Activated T-helper 1 cell treated with anti-CD3 and anti-CD28 coated beads, Interleukin-12 subunit alpha, Interleukin-12 subunit beta, Interleukin-2, Interleukin-4 antibody, amounts not matched to agents 30 ng/mL and 10 ng/mL and 1 ng/mL, durations not matched to agents 14 hours and 24 hours and 36 hours (primary cell): ENCODE measurements at regions of chr1 and their contacts with region 1.

Region 1: GRCh38 chr1:6393400-6394187 is at the start of gene ACOT7:
- DNase-seq: peak; percentile 87
- H3K4me3 Mint-ChIP-seq: peak within 1 kb of the TSS; percentile 89
- H3K27ac Mint-ChIP-seq: peak within 1 kb of the TSS; percentile 94
- H3K4me1 Mint-ChIP-seq: peaks cover 35% of the 10 kb centered on the region
- H3K27me3 Mint-ChIP-seq: no peaks in the 10 kb centered on the region
- total RNA-seq, gene ACOT7: 124 and 126 TPM in 2 replicates

Region 2: GRCh38 chr1:6026095-6026809 is 367.3 kb before region 1 on chr1:
- intact Hi-C with region 1: loop called (anchors 10 kb)
- DNase-seq: peak; percentile 90
- H3K4me3 Mint-ChIP-seq: peak overlapping the region; percentile 97
- H3K27ac Mint-ChIP-seq: peak overlapping the region; percentile 94
- H3K4me1 Mint-ChIP-seq: peaks cover 50% of the 10 kb centered on the region
- H3K27me3 Mint-ChIP-seq: no peaks in the 10 kb centered on the region

Region 3: GRCh38 chr1:6235296-6235677 is 158.3 kb before region 1 on chr1:
- intact Hi-C with region 1: loop called (anchors 1 kb)
- DNase-seq: peak; percentile 14
- H3K4me3 Mint-ChIP-seq: peak overlapping the region; percentile 91
- H3K27ac Mint-ChIP-seq: peak overlapping the region; percentile 87
- H3K4me1 Mint-ChIP-seq: peaks cover 19% of the 10 kb centered on the region
- H3K27me3 Mint-ChIP-seq: peaks cover 9% of the 10 kb centered on the region

Region 4: DNA sequence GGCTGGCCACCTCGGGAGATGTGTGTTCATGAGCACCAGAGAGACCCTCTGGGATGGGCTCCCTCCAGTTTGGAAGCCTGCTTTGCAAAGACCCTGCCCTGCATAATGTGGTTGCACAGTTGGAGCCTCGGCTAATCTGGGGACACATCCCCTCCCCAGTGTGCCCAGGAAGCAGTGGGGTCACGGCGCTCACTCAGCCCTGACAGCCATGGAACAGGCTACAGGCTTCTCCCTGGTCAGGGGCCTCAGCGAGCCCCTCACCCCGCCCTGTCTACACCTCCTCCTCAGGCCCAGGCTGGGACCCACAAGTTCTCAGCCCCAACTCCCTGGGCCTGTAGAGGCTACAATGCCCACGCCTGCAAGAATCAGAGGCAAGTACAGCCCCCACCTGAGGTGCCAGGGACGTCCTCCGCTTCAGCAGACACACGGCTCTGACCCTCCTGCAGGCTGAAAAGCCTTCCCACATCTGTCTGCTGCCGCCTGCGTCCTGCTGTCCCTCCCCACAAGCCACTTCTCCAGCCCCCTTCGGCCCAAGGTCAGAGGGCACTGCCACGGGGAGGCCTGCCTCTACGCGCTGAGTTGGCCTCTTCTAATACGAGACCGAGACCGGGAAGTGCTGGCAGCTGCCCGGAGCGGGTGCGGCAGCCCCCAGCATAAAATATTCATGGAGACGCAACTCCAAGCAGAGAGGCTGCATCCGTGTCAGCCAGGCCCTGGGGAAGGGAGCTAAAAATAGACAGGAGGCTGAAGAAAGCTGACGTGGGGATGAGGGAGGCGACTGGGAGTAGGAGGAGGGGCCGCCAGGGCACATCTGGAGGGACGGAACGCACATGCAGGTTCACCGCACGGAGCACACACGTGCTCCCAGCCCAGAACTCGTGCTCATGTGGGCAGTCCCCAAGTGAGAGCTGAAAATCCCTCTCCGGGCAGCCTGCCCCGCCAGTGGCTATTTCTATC is 117.5 kb before region 1 on chr1:
- intact Hi-C with region 1: no loop called
- DNase-seq: no peak
- H3K4me3 Mint-ChIP-seq: no peak overlapping the region
- H3K27ac Mint-ChIP-seq: no peak overlapping the region
- H3K4me1 Mint-ChIP-seq: no peaks in the 10 kb centered on the region
- H3K27me3 Mint-ChIP-seq: no peaks in the 10 kb centered on the region

Region 5: DNA sequence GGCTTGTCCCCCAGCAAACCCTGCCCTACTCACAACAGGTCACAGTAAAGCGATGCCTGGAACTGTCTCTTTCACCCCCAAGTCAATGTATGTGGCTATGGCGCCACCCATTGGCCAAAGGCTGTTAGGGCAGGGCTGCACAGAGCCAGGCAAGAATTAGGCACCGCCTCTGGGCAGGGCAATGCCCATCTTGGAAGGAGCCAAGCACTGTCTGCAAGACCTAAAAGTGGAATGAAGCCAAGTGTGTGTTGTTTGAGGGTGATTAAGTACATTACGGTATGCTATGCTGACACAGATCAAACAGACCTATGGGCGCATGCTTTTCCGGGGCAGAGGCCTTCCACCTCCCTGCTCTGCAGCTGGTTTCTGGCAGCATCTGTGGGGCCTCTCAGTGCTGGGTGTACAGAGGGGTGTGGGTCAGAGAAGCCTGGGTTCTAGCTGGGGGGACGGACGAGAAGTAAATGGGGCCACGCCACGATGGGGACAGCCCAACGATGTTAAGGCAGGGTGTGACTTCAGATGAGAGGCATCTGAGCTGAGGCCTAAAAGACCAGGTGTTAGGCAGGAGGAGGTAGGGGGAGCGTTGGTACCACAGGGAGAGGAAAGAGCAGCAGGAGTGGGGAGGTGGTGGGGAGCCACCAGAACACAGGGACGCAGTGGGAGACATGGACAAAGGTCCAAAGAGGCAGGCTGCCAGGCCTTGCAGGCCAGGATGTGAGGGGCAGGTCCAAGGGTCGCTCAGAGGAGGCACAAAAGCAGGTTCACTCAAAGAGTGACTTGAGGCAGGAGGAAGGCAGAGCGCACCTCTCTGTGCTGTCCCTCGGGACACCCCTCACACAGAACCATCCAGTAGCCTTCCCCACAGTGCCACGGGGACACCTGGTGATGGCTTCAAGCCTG is 49.8 kb before region 1 on chr1:
- intact Hi-C with region 1: loop called (anchors 1 kb)
- DNase-seq: peak; percentile 58
- H3K4me3 Mint-ChIP-seq: no peak overlapping the region
- H3K27ac Mint-ChIP-seq: no peak overlapping the region
- H3K4me1 Mint-ChIP-seq: peaks cover 18% of the 10 kb centered on the region
- H3K27me3 Mint-ChIP-seq: peaks cover 1% of the 10 kb centered on the region

Region 6: GRCh38 chr1:6365047-6365446 is 28.5 kb before region 1 on chr1:
- intact Hi-C with region 1: loop called (anchors 1 kb)
- DNase-seq: no peak
- H3K4me3 Mint-ChIP-seq: no peak overlapping the region
- H3K27ac Mint-ChIP-seq: peak overlapping the region; percentile 49
- H3K4me1 Mint-ChIP-seq: peaks cover 29% of the 10 kb centered on the region
- H3K27me3 Mint-ChIP-seq: no peaks in the 10 kb centered on the region

Region 7: GRCh38 chr1:6962996-6963911 is 569.7 kb after region 1 on chr1:
- intact Hi-C with region 1: loop called (anchors 2 kb)
- DNase-seq: peak; percentile 29
- H3K4me3 Mint-ChIP-seq: peak overlapping the region; percentile 63
- H3K27ac Mint-ChIP-seq: peak overlapping the region; percentile 74
- H3K4me1 Mint-ChIP-seq: peaks cover 12% of the 10 kb centered on the region
- H3K27me3 Mint-ChIP-seq: peaks cover 21% of the 10 kb centered on the region

Region 8: GRCh38 chr1:7070389-7071029 is 676.9 kb after region 1 on chr1:
- intact Hi-C with region 1: no loop called
- DNase-seq: peak; percentile 23
- H3K4me3 Mint-ChIP-seq: no peak overlapping the region
- H3K27ac Mint-ChIP-seq: no peak overlapping the region
- H3K4me1 Mint-ChIP-seq: no peaks in the 10 kb centered on the region
- H3K27me3 Mint-ChIP-seq: peaks cover 4% of the 10 kb centered on the region